Esophagus muscularis mucosa (tissue), 4 donors: ENCODE measurements at regions of chr3 and their contacts with region 1.

Region 1: DNA sequence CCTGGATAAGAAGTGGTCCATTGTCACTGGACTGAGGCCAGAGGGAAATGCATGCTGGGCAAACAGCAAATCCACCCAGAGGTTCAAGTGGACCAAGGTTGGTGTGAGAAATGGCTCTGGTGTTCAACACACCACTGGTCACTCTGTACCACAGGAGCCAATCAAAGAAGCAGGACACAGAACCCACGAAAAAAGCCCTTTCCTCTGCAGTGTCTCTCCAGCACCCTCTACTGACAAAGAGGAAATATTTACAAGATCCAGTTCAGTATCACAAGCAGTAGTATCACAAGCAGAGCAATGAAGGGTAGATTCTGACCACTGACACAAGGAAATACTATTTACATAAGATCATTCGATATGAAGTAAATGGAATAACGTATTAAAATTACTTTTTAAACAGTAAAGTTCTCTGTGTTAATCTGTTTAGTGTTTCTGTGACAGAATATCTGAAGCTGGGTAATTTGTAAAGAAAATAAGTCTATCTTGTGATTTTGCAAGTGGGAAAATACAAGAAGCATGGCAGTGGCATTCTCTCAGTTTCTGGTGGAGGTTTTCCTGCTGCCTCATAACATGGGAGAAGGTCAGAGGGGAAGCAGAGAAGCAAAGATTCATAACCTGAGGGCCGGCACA is 390.7 kb downstream of the EFHB start:
- DNase-seq: no peak
- H3K4me3 ChIP-seq: no peak overlapping the region
- H3K27ac ChIP-seq: no peak overlapping the region
- H3K4me1 ChIP-seq: no peaks in the 10 kb centered on the region
- H3K27me3 ChIP-seq: no peaks in the 10 kb centered on the region
- CTCF ChIP-seq: peak in 2 of 3 experiments; percentile 30 to 34
- EP300 ChIP-seq: no peak
- POLR2A ChIP-seq: no peak

Region 2: GRCh38 chr3:19348929-19349564 is 194.3 kb before region 1 on chr3:
- intact Hi-C with region 1: loop called (anchors 10 kb)
- DNase-seq: no peak
- H3K4me3 ChIP-seq: no peak overlapping the region
- H3K27ac ChIP-seq: no peak overlapping the region
- H3K4me1 ChIP-seq: peaks cover 0 to 7% (median 0%) of the 10 kb centered on the region in 4 donors
- H3K27me3 ChIP-seq: no peaks in the 10 kb centered on the region
- CTCF ChIP-seq: peak; percentile 46 to 68 (median 47)
- EP300 ChIP-seq: no peak
- POLR2A ChIP-seq: no peak